ENCODE measurements at regions of chr3 and their contacts with region 1.

Region 1: GRCh38 chr3:141311496-141312353 is 56.6 kb upstream of the ZBTB38 start:
- DNase-seq: peak; percentile 97 to 98
- ATAC-seq: peak; percentile 96 to 97
- H3K4me3 ChIP-seq: peak overlapping the region; percentile 83
- H3K27ac ChIP-seq: peak overlapping the region; percentile 89
- H3K4me1 ChIP-seq: peaks cover 14% of the 10 kb centered on the region
- CTCF ChIP-seq: peak; percentile 85
- EP300 ChIP-seq: no peak
- POLR2A ChIP-seq: peak; percentile 81
- RAD21 ChIP-seq: peak; percentile 96 to 99

Region 2: DNA sequence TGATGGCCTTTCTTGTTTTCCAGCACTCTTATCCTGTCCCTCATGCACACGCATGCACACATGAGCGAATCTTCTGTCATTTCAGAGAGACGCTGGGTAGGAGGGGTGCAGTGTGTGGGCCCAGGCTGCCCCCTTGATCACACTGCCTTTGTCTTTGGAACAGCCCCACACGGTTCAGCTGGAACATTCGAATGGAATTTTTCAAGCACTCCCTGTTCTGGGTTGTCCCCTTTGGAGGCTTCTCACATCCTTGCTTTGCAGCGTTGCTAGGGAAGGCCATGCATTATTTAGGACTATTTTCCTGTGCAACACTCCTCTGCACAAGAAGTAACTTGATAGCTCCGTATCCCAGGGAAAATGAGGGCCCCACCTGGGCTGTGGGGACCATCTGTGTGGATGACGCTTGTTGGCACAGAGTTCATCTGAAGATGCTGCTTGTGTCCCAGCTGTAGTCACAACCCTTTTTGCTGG is 182.1 kb before region 1 on chr3:
- CTCF ChIA-PET with region 1: no interaction called
- POLR2A ChIA-PET with region 1: no interaction called
- DNase-seq: no peak
- ATAC-seq: no peak
- H3K4me3 ChIP-seq: no peak overlapping the region
- H3K27ac ChIP-seq: no peak overlapping the region
- H3K4me1 ChIP-seq: no peaks in the 10 kb centered on the region
- CTCF ChIP-seq: no peak
- EP300 ChIP-seq: no peak
- POLR2A ChIP-seq: no peak
- RAD21 ChIP-seq: no peak

Region 3: GRCh38 chr3:141231101-141231935 is 80.4 kb before region 1 on chr3 and contains the start of gene PXYLP1:
- CTCF ChIA-PET with region 1: interaction called, 16 read pairs
- POLR2A ChIA-PET with region 1: interaction called, 3 read pairs
- DNase-seq: peak; percentile 75 to 84
- ATAC-seq: peak; percentile 94 to 96
- H3K4me3 ChIP-seq: peak within 1 kb of the TSS; percentile 90
- H3K27ac ChIP-seq: peak within 1 kb of the TSS; percentile 89 to 90
- H3K4me1 ChIP-seq: peaks cover 21% of the 10 kb centered on the region; the same call in 2 of the 3 replicates
- CTCF ChIP-seq: peak; percentile 95
- EP300 ChIP-seq: no peak
- POLR2A ChIP-seq: peak; percentile 89
- RAD21 ChIP-seq: peak in 1 of 2 experiments; percentile 64; a peak in 4 of 5 replicates
- polyA plus RNA-seq, gene PXYLP1: 11.7 and 12.1 TPM in 2 replicates

Region 4: DNA sequence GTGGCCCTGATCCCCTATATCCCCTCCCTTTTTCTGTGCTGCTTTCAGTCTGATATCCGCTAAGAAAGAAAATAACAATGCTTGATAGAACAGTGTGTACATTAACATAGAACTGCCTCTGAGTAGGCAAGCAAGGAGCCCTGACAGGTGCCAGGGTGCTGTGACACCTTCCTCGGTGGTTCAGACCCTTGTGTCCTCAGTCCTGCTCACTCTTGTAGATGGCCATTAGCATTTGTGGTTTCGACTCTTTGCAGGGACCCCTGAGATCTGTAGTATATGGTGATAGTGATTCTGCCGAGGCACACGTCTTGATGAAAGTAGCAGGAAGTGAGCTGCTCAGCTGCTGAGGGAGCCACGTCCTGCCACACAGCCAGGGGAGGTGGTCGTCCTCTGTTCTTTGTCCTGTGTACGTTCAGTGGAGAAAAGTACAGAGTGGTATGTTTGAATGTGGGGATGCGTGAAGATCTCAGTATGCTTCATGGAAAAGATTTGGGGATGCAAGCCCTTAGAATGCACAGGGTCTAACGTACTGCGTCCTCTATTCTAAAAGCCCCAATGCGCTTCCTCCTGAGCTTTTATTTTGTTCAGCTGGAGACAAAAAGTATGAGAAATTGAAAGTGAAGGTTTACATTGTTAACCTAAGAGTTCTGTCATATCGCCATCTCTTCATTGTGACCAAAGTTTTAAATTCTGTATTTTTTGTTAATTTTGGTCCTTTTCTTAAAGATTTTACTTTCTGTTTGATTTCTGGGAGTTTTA is 44.7 kb before region 1 on chr3:
- CTCF ChIA-PET with region 1: no interaction called
- POLR2A ChIA-PET with region 1: no interaction called
- DNase-seq: no peak
- ATAC-seq: no peak
- H3K4me3 ChIP-seq: no peak overlapping the region
- H3K27ac ChIP-seq: no peak overlapping the region
- H3K4me1 ChIP-seq: no peaks in the 10 kb centered on the region
- CTCF ChIP-seq: no peak
- EP300 ChIP-seq: no peak
- POLR2A ChIP-seq: no peak
- RAD21 ChIP-seq: no peak

Region 5: DNA sequence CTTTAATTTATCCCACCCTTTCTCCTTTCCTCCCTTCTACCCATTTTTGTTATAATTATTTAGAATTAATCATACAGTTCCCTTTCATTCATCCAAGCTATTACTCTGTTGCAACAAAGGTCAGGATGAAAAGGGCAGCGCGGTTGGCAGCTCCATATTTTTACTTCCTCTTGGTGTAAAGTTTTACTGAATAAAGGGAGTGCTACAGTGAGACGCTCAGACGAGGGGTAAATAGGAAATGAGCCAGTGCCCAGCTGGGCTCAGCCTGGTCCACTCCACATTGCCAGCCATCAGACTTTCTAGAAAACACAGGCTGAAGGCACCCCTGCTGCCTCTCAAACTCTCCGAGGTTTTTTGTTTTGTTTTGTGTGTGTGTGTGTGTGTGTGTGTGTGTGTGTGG is 34.7 kb after region 1 on chr3:
- CTCF ChIA-PET with region 1: interaction called, 14 read pairs
- POLR2A ChIA-PET with region 1: no interaction called
- DNase-seq: no peak
- ATAC-seq: no peak
- H3K4me3 ChIP-seq: no peak overlapping the region
- H3K27ac ChIP-seq: peak overlapping the region; percentile 47 to 74
- H3K4me1 ChIP-seq: peaks cover 25% of the 10 kb centered on the region
- CTCF ChIP-seq: no peak
- EP300 ChIP-seq: no peak
- POLR2A ChIP-seq: no peak
- RAD21 ChIP-seq: no peak

Region 6: GRCh38 chr3:141386611-141387111 is 74.9 kb after region 1 on chr3:
- CTCF ChIA-PET with region 1: interaction called, 13 read pairs
- POLR2A ChIA-PET with region 1: no interaction called
- DNase-seq: no peak
- ATAC-seq: no peak; a peak in 1 of 6 replicates
- H3K4me3 ChIP-seq: no peak overlapping the region
- H3K27ac ChIP-seq: peak overlapping the region; percentile 16 to 56; a peak in 3 of 6 replicates
- H3K4me1 ChIP-seq: peaks cover 63% of the 10 kb centered on the region
- CTCF ChIP-seq: no peak
- EP300 ChIP-seq: no peak
- POLR2A ChIP-seq: no peak
- RAD21 ChIP-seq: no peak

Region 7: GRCh38 chr3:141431411-141432378 is 120.0 kb after region 1 on chr3:
- CTCF ChIA-PET with region 1: interaction called, 19 read pairs
- POLR2A ChIA-PET with region 1: interaction called, 7 read pairs
- DNase-seq: no peak
- ATAC-seq: no peak
- H3K4me3 ChIP-seq: no peak overlapping the region
- H3K27ac ChIP-seq: peak overlapping the region; percentile 4 to 68; a peak in 4 of 6 replicates
- H3K4me1 ChIP-seq: peaks cover 70% of the 10 kb centered on the region
- CTCF ChIP-seq: no peak
- EP300 ChIP-seq: no peak
- POLR2A ChIP-seq: no peak
- RAD21 ChIP-seq: no peak

Region 8: GRCh38 chr3:141460097-141460704 is 148.5 kb after region 1 on chr3:
- CTCF ChIA-PET with region 1: interaction called, 354 read pairs
- POLR2A ChIA-PET with region 1: interaction called, 21 read pairs
- DNase-seq: peak; percentile 86 to 92
- ATAC-seq: peak; percentile 99 to 100
- H3K4me3 ChIP-seq: no peak overlapping the region
- H3K27ac ChIP-seq: peak overlapping the region in 1 of 2 experiments; percentile 46; a peak in 4 of 6 replicates
- H3K4me1 ChIP-seq: peaks cover 7% of the 10 kb centered on the region; the same call in 1 of the 3 replicates
- CTCF ChIP-seq: peak; percentile 95
- EP300 ChIP-seq: no peak
- POLR2A ChIP-seq: no peak
- RAD21 ChIP-seq: peak; percentile 97 to 98

Measured in A549 (cell line).